ENCODE measurements at regions of chrX and their contacts with region 1.

Region 1: DNA sequence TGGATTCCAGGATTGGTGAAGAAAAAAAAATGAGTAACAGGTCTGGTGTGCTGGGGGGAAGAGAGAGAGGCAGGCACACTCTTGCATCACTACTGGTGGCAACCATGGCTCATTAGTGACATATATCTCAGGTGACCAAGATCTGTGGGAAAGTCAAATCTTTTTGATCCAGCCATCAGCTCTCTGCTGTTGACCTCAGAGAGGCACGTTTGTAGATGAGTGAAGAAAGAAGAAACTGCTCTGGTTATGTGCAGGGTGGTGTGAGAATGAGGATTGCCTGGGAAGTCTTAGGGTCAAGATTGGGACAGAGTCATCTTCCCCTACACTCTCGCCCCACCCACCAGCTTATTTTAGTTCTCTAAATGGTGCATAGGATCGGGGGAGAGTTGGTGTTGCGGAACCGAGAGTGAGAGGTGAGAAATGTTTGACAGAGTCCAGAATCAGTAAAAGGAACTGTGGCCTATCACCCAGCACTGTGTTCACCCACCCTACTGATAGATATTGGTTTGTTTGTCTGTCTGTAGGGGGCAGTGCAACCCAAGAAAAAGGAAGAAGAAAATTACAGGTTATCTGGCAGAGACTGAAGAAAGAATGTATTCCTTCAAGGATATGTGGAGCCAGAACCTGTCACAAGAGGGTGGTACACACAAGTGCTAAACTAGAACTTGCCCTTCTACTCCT is 21.9 kb downstream of the ARMCX6 start:
- DNase-seq: no peak
- H3K4me3 ChIP-seq: no peak overlapping the region
- H3K27me3 ChIP-seq: no peaks in the 10 kb centered on the region
- CTCF ChIP-seq: peak; percentile 64

Region 2: GRCh38 chrX:101759000-101759399 is 163.1 kb after region 1 on chrX:
- CTCF ChIA-PET with region 1: interaction called, 14 read pairs
- POLR2A ChIA-PET with region 1: no interaction called
- DNase-seq: no peak
- H3K4me3 ChIP-seq: no peak overlapping the region
- H3K27me3 ChIP-seq: no peaks in the 10 kb centered on the region
- CTCF ChIP-seq: peak; percentile 42

Measured in BJ (cell line).